ENCODE measurements at regions of chr11 and their contacts with region 1.

Region 1: DNA sequence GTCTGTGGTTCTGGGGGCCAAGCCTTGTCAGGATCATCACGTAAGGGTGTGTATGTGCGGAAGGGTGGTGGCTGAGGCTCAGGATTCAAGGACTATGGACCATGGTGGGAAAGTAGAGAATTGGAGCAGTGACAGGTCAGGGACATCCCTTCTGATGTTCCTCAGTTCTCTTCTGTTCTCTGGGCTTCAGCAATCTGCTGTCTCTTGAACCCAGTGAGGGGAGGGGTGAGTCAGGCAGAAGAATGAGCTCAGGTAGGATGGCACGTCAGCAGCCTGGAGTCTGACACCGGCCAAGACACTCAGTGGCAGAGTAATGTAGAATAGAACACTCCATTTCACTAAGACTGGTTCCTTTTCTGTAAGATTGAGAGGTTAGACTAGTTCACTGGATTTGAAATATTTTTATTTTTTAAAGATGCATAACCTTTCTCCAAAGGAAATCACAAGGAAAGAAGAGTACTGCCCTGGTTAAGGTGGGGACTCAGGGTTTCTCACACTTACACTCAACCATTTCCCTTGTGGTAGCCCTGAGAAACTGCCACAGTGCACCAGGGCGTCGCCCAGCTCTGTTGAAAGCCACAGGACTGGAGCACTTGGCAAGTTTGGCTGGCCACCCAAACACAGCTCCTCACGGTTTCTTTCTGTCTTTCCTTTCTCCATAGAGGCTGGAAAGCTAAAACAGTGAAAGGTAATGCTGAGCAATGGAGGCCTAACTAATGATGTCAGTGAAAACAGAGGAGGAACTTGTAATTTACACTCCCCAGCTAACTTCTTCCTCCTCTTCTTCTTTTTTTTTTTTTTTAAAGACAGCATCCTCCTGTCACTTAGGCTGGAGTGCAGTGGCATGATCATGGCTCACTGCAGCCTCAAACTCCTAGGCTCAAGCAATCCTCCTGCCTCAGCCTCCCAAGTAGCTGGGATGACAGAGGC is 23.1 kb upstream of the MICAL2 start:
- DNase-seq: peak; percentile 50
- H3K4me3 ChIP-seq: peak overlapping the region in 1 of 3 experiments; percentile 54
- H3K27ac ChIP-seq: peak overlapping the region; percentile 99
- H3K4me1 ChIP-seq: peaks cover 76% of the 10 kb centered on the region
- H3K27me3 ChIP-seq: no peaks in the 10 kb centered on the region
- CTCF ChIP-seq: peak; percentile 14 to 35
- POLR2A ChIP-seq: peak; percentile 50

Region 2: DNA sequence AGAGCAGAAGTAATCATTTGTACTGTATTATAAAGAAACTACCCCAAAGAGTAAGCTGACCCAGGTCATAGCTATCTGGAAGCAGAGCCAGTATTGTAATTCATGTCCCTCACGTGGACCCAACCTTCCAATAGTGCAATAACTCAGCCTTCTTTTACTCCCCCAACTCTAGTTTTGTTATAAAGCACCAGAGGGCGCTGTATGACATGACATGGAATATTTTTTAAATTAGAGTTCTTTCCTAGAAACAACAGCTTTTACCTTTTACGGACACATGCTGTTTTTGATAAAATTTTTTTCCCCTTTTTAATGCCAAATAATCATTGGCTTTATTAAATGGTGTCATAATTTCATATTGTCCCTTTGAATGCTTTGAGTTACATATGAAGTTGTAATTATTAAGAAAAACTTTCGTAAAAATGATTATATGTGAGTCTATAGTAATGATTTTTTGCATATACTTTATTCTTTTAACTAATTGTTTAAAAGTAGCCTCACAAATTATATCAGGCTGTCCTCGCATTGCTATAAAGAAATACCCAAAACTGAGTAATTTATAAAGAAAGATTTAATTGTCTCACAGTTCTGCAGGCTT is 155.8 kb before region 1 on chr11:
- CTCF ChIA-PET with region 1: interaction called, 11 read pairs
- POLR2A ChIA-PET with region 1: no interaction called
- dilution Hi-C with region 1: no loop called
- intact Hi-C with region 1: no loop called
- DNase-seq: peak; percentile 79
- H3K4me3 ChIP-seq: no peak overlapping the region
- H3K27ac ChIP-seq: no peak overlapping the region
- H3K4me1 ChIP-seq: peaks cover 6% of the 10 kb centered on the region
- H3K27me3 ChIP-seq: no peaks in the 10 kb centered on the region
- CTCF ChIP-seq: peak; percentile 32 to 51
- POLR2A ChIP-seq: no peak

Region 3: GRCh38 chr11:12052676-12053605 is 34.4 kb before region 1 on chr11:
- CTCF ChIA-PET with region 1: interaction called, 41 read pairs
- POLR2A ChIA-PET with region 1: no interaction called
- dilution Hi-C with region 1: no loop called
- intact Hi-C with region 1: no loop called
- DNase-seq: no peak
- H3K4me3 ChIP-seq: no peak overlapping the region
- H3K27ac ChIP-seq: no peak overlapping the region
- H3K4me1 ChIP-seq: no peaks in the 10 kb centered on the region
- H3K27me3 ChIP-seq: no peaks in the 10 kb centered on the region
- CTCF ChIP-seq: peak in 1 of 2 donors; percentile 5
- POLR2A ChIP-seq: no peak

Region 4: GRCh38 chr11:12110201-12110713 is 22.9 kb after region 1 on chr11 and contains the start of gene MICAL2:
- CTCF ChIA-PET with region 1: interaction called, 12 read pairs
- POLR2A ChIA-PET with region 1: interaction called, 3 read pairs
- dilution Hi-C with region 1: no loop called
- intact Hi-C with region 1: loop called (anchors 1 kb)
- DNase-seq: peak; percentile 87
- H3K4me3 ChIP-seq: peak within 1 kb of the TSS; percentile 50 to 86 (median 73)
- H3K27ac ChIP-seq: peak within 1 kb of the TSS; percentile 56
- H3K4me1 ChIP-seq: peaks cover 40% of the 10 kb centered on the region
- H3K27me3 ChIP-seq: no peaks in the 10 kb centered on the region
- CTCF ChIP-seq: no peak
- POLR2A ChIP-seq: peak; percentile 85
- total RNA-seq, gene MICAL2: 200 and 222 TPM in 2 replicates

Region 5: DNA sequence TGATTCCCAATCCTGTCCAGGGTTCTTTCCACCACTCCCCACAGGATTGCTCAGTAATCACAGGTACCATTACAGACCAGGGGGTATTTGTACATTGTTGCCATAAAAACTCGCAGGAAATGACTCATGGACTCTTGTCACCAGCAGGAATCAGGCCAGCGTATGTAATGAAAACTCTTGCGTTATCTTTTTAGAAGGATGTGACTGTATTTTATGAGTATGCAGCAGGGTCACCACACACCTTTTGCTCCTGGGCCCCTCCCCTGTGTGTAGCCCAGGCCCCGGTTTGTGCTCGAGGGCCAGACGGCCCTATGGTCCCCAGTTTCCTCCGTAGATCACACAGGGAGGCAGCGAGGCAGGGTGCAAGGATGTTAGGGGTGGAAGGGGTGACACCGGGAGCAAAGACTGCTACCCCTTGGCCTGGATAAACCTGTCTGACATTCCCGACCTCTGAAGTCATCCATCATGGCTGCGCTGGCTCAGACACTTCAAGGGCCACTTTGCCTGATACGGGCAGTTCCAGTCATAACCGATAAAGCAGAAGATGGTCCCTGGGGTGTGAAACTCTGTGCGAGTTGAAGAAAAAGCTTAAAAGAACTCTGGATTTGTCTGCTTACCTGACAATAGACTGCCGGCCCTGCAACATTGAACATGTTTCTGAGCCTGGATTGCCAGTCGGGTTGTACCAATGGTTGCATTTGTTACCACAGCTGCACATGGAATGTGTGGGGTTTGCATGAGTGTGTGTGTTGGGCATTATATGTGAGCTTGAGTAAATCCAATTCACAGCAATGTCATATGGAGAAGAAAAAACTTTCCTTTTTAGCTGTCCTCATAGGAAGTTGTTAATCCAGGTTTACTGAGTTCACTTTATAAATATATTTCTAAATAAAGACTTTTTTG is 80.0 kb after region 1 on chr11:
- CTCF ChIA-PET with region 1: interaction called, 11 read pairs
- POLR2A ChIA-PET with region 1: interaction called, 12 read pairs
- dilution Hi-C with region 1: no loop called
- intact Hi-C with region 1: loop called (anchors 1 kb)
- DNase-seq: peak; percentile 92
- H3K4me3 ChIP-seq: no peak overlapping the region
- H3K27ac ChIP-seq: peak overlapping the region; percentile 95
- H3K4me1 ChIP-seq: peaks cover 59% of the 10 kb centered on the region
- H3K27me3 ChIP-seq: no peaks in the 10 kb centered on the region
- CTCF ChIP-seq: no peak
- POLR2A ChIP-seq: peak; percentile 78

Region 6: GRCh38 chr11:12200279-12201010 is 113.1 kb after region 1 on chr11:
- CTCF ChIA-PET with region 1: interaction called, 14 read pairs
- POLR2A ChIA-PET with region 1: interaction called, 10 read pairs
- dilution Hi-C with region 1: no loop called
- intact Hi-C with region 1: loop called (anchors 1 kb)
- DNase-seq: peak; percentile 93
- H3K4me3 ChIP-seq: no peak overlapping the region
- H3K27ac ChIP-seq: peak overlapping the region; percentile 94
- H3K4me1 ChIP-seq: peaks cover 45% of the 10 kb centered on the region
- H3K27me3 ChIP-seq: no peaks in the 10 kb centered on the region
- CTCF ChIP-seq: no peak
- POLR2A ChIP-seq: no peak

Region 7: GRCh38 chr11:12281571-12282478 is 194.5 kb after region 1 on chr11:
- CTCF ChIA-PET with region 1: interaction called, 66 read pairs
- POLR2A ChIA-PET with region 1: interaction called, 5 read pairs
- dilution Hi-C with region 1: no loop called
- intact Hi-C with region 1: loop called (anchors 1 kb)
- DNase-seq: peak; percentile 81
- H3K4me3 ChIP-seq: no peak overlapping the region
- H3K27ac ChIP-seq: no peak overlapping the region
- H3K4me1 ChIP-seq: peaks cover 27% of the 10 kb centered on the region
- H3K27me3 ChIP-seq: no peaks in the 10 kb centered on the region
- CTCF ChIP-seq: peak; percentile 82 to 91
- POLR2A ChIP-seq: no peak

Measured in endothelial cell of umbilical vein (primary cell).